Activated B cell treated with CpG ODN at 0.5 μM for 24 hours (primary cell): ENCODE measurements at regions of chr13 and their contacts with region 1.

Region 1: GRCh38 chr13:27073186-27073585 is 98.4 kb downstream of the USP12 start:
- DNase-seq: no peak
- ATAC-seq: no peak
- H3K4me3 Mint-ChIP-seq: no peak overlapping the region
- H3K27ac Mint-ChIP-seq: no peak overlapping the region
- H3K4me1 Mint-ChIP-seq: no peaks in the 10 kb centered on the region
- H3K27me3 Mint-ChIP-seq: no peaks in the 10 kb centered on the region
- CTCF ChIP-seq: no peak

Region 2: DNA sequence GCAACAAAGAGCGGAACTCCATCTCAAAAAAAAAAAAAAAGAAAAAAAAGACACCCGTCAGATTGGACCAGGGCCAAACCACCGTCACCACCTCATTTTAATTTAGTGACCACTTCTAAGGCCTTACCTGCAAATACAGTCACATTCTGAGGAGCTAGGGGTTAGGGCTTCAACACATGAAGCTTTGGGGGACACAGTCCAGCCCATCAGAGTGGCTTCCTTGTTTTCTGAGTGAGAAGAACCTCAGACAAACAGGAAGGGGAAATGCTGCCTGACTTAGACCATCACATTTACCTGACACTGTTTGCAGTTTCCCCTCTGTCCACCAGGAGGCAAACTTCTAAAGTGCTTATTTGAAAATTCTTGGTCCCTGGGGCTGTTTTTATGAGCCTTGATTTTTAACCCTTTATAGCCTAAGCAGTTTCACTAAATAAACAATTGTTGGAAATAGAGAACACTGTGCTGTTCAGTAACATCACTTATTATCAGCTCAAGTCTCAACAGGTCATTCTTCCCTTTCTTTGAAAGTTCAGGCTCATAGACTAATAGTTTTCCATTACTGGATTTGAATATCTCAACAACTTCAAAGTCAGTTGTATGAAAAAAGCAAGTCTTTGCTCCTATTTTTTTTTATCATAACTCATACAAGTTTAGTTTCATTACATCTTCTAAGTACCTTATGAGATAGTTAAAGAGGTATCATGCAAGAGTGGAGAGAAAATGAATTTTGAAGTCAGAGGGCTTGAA is 590.6 kb before region 1 on chr13:
- CTCF ChIA-PET with region 1: no interaction called
- POLR2A ChIA-PET with region 1: no interaction called
- intact Hi-C with region 1: no loop called
- DNase-seq: no peak
- ATAC-seq: peak; percentile 82
- H3K4me3 Mint-ChIP-seq: peak overlapping the region; percentile 48
- H3K27ac Mint-ChIP-seq: no peak overlapping the region
- H3K4me1 Mint-ChIP-seq: peaks cover 6% of the 10 kb centered on the region
- H3K27me3 Mint-ChIP-seq: peaks cover 2% of the 10 kb centered on the region
- CTCF ChIP-seq: no peak

Region 3: DNA sequence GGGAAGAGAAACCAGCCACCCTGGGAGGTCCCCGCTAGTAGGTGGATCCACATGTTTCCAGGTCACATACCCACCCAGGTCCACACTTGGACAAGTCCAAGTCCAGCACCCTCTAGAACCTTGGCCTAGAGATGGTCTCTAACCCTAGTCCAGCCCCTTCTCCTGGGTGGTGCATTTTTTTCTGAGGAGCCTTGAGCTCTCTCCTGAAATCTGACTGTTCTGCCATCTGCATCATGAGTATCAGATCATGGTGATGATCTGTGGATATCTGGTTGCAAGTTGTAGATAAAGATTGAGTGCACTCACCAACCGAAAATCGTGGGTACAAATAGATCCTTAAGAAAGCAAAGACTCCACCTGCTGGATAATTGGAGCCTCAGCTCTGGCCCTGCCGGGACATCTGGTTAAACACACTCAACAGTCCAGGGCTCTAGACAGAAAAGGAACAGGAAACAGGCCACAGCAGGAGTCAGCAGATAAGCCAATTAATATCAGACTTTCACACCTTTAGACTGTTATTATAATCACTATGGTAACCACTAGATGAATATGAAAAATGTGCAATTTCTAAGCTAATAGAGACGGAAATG is 353.7 kb before region 1 on chr13:
- CTCF ChIA-PET with region 1: no interaction called
- POLR2A ChIA-PET with region 1: no interaction called
- intact Hi-C with region 1: no loop called
- DNase-seq: no peak
- ATAC-seq: no peak
- H3K4me3 Mint-ChIP-seq: no peak overlapping the region
- H3K27ac Mint-ChIP-seq: no peak overlapping the region
- H3K4me1 Mint-ChIP-seq: peaks cover 17% of the 10 kb centered on the region
- H3K27me3 Mint-ChIP-seq: peaks cover 5% of the 10 kb centered on the region
- CTCF ChIP-seq: no peak

Region 4: DNA sequence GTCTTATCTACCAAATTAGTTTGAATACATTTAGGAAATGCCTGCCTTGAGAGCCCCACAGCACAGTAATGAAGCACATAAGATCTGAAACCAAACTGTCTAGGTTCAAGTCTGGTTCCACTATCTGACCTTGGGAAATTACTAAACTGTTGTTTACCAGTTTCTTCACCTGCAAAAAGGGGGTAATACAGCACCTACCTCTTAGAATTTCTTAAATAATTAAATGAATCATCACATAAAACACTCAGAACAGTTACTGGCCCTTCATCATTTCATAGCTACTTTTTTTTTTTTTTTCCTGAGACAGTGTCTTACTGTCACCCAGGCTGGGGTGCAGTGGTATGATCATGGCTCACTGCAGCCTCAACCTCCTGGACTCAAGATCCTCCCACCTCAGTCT is 38.8 kb after region 1 on chr13:
- CTCF ChIA-PET with region 1: no interaction called
- POLR2A ChIA-PET with region 1: no interaction called
- intact Hi-C with region 1: loop called (anchors 5 kb)
- DNase-seq: no peak
- ATAC-seq: no peak
- H3K4me3 Mint-ChIP-seq: no peak overlapping the region
- H3K27ac Mint-ChIP-seq: no peak overlapping the region
- H3K4me1 Mint-ChIP-seq: peaks cover 55% of the 10 kb centered on the region
- H3K27me3 Mint-ChIP-seq: no peaks in the 10 kb centered on the region
- CTCF ChIP-seq: no peak

Region 5: DNA sequence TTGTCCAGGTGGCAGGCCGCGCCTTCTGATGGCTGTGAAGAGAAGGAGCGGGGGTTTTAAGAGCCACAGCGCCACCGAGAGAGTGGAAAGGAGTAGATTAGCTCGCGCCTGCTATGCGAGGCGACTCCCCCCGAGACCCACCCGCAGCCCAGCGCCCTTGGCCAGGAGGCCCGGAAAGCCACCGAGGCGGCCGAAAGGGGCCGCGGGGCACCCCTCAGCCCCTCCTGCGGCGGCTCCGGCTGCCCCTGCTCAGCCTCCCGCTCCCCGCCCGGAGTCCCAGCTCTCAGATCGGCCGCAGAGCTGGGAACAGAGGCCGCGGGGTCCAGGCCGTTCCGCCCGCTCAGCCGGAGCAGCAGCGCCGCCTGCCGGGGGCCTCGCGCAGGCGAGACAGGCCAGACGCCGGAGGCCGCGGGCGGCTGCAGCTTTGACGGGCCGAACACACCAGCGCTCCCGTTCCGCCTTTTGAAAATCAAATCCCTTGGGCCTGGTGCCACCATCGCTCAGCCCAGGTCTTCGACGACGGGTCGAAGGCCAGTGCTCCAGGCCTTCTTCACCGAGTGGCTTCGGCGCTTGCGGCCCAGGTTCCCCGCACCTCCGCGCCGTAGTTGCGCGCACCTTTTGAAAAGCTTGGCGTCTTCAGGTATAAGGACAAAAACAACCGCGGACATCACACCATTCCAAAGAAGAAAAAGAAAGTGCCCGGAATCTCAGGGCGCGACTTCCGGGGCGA is 880.7 kb after region 1 on chr13:
- CTCF ChIA-PET with region 1: no interaction called
- POLR2A ChIA-PET with region 1: no interaction called
- intact Hi-C with region 1: no loop called
- DNase-seq: peak; percentile 73
- ATAC-seq: peak; percentile 92
- H3K4me3 Mint-ChIP-seq: peak overlapping the region; percentile 77
- H3K27ac Mint-ChIP-seq: peak overlapping the region; percentile 30
- H3K4me1 Mint-ChIP-seq: peaks cover 15% of the 10 kb centered on the region
- H3K27me3 Mint-ChIP-seq: peaks cover 61% of the 10 kb centered on the region
- CTCF ChIP-seq: no peak